MCF 10A (cell line): ENCODE measurements at regions of chr11 and their contacts with region 1.

Region 1: DNA sequence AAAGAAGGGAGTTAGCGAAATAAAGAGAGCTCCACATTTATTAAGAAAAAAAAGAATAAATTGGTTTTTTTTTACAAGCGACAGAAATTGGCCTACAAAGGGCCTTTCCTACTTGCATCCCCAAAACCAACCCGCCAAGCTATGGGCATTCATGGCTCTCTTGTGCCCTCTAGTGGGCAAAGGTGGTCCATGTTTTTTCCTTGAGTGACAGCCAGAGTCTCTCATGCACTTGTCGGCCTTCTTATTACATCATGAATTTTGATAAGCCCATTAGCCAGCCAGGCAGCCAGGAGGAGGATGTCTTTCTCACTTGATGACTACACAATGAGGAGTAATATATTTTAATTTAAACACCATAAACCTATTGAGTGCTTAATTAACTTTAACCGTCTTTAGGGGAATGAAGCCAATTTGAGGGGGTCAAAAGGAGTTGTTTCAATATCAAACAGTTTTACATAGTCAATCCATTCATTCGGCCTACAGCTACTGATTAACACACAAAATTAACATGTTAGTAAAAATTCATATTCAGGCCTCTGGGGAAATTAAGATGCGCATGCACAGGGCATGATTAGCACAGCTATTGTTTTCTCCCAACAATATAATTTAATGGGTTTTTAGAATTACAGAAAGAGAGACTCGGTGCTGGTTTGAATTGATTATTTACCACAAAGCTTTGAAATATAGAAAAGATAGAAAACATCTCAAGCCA is 85.5 kb downstream of the RCN1 start:
- DNase-seq: peak; percentile 89
- H3K4me3 Mint-ChIP-seq: no peak overlapping the region
- H3K27ac Mint-ChIP-seq: no peak overlapping the region
- H3K4me1 Mint-ChIP-seq: no peaks in the 10 kb centered on the region
- H3K27me3 Mint-ChIP-seq: peaks cover 21% of the 10 kb centered on the region
- CTCF ChIP-seq: peak; percentile 86

Region 2: GRCh38 chr11:30960387-30960992 is 1215.9 kb before region 1 on chr11:
- CTCF ChIA-PET with region 1: interaction called, 3 read pairs
- POLR2A ChIA-PET with region 1: no interaction called
- intact Hi-C with region 1: loop called (anchors 5 kb)
- DNase-seq: peak; percentile 30
- H3K4me3 Mint-ChIP-seq: no peak overlapping the region
- H3K27ac Mint-ChIP-seq: no peak overlapping the region
- H3K4me1 Mint-ChIP-seq: no peaks in the 10 kb centered on the region
- H3K27me3 Mint-ChIP-seq: peaks cover 21% of the 10 kb centered on the region
- CTCF ChIP-seq: peak; percentile 56

Region 3: DNA sequence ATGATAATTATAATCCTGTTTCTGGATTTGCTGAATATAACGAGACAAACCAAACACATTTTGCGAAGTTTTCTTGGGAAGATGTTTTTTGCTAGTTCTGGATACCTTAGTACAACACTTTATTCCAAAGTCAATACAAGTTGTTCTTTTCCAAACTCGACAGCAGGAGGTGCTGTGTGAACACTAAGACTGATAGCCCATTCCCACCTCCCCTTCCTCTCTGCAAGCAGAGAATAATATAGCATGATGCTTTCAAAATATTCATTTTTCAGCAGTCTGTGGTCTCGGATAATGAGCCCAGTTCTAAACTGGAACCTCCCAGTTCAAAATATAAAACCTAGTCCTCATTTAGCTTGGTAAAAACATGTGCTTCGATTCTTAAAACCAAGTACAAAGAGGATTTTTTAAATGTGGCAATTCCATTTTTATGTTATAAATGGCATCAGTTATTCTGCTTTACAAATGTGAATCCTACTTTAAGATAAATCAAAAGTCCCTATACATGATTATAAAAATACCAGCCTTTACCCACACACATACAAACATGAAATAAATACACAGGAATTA is 936.0 kb before region 1 on chr11:
- CTCF ChIA-PET with region 1: interaction called, 29 read pairs
- POLR2A ChIA-PET with region 1: no interaction called
- intact Hi-C with region 1: loop called (anchors 1 kb)
- DNase-seq: peak; percentile 67
- H3K4me3 Mint-ChIP-seq: no peak overlapping the region
- H3K27ac Mint-ChIP-seq: no peak overlapping the region
- H3K4me1 Mint-ChIP-seq: peaks cover 4% of the 10 kb centered on the region
- H3K27me3 Mint-ChIP-seq: peaks cover 17% of the 10 kb centered on the region
- CTCF ChIP-seq: peak; percentile 71

Region 4: GRCh38 chr11:31641477-31642062 is 534.8 kb before region 1 on chr11:
- CTCF ChIA-PET with region 1: interaction called, 4 read pairs
- POLR2A ChIA-PET with region 1: no interaction called
- intact Hi-C with region 1: loop called (anchors 1 kb)
- DNase-seq: peak; percentile 61
- H3K4me3 Mint-ChIP-seq: no peak overlapping the region
- H3K27ac Mint-ChIP-seq: no peak overlapping the region
- H3K4me1 Mint-ChIP-seq: peaks cover 11% of the 10 kb centered on the region
- H3K27me3 Mint-ChIP-seq: no peaks in the 10 kb centered on the region
- CTCF ChIP-seq: peak; percentile 76

Region 5: GRCh38 chr11:32052218-32052617 is 124.2 kb before region 1 on chr11:
- CTCF ChIA-PET with region 1: interaction called, 241 read pairs
- POLR2A ChIA-PET with region 1: interaction called, 4 read pairs
- intact Hi-C with region 1: loop called (anchors 1 kb)
- DNase-seq: peak; percentile 72
- H3K4me3 Mint-ChIP-seq: no peak overlapping the region
- H3K27ac Mint-ChIP-seq: no peak overlapping the region
- H3K4me1 Mint-ChIP-seq: peaks cover 6% of the 10 kb centered on the region
- H3K27me3 Mint-ChIP-seq: peaks cover 45% of the 10 kb centered on the region
- CTCF ChIP-seq: peak; percentile 74

Region 6: GRCh38 chr11:32154275-32154674 is 22.1 kb before region 1 on chr11:
- CTCF ChIA-PET with region 1: interaction called, 58 read pairs
- POLR2A ChIA-PET with region 1: no interaction called
- intact Hi-C with region 1: no loop called
- DNase-seq: peak; percentile 46
- H3K4me3 Mint-ChIP-seq: no peak overlapping the region
- H3K27ac Mint-ChIP-seq: no peak overlapping the region
- H3K4me1 Mint-ChIP-seq: no peaks in the 10 kb centered on the region
- H3K27me3 Mint-ChIP-seq: peaks cover 52% of the 10 kb centered on the region
- CTCF ChIP-seq: peak; percentile 37

Region 7: GRCh38 chr11:32290783-32291182 is 114.4 kb after region 1 on chr11:
- CTCF ChIA-PET with region 1: interaction called, 98 read pairs
- POLR2A ChIA-PET with region 1: no interaction called
- intact Hi-C with region 1: no loop called
- DNase-seq: no peak
- H3K4me3 Mint-ChIP-seq: no peak overlapping the region
- H3K27ac Mint-ChIP-seq: peak overlapping the region; percentile 28
- H3K4me1 Mint-ChIP-seq: peaks cover 7% of the 10 kb centered on the region
- H3K27me3 Mint-ChIP-seq: no peaks in the 10 kb centered on the region
- CTCF ChIP-seq: no peak